Cardiac septum (tissue), 1 donor: ENCODE measurements at regions of chr1 and their contacts with region 1.

Region 1: GRCh38 chr1:12658531-12659453 is 14.9 kb downstream of the AADACL4 start:
- DNase-seq: peak; percentile 83

Region 2: DNA sequence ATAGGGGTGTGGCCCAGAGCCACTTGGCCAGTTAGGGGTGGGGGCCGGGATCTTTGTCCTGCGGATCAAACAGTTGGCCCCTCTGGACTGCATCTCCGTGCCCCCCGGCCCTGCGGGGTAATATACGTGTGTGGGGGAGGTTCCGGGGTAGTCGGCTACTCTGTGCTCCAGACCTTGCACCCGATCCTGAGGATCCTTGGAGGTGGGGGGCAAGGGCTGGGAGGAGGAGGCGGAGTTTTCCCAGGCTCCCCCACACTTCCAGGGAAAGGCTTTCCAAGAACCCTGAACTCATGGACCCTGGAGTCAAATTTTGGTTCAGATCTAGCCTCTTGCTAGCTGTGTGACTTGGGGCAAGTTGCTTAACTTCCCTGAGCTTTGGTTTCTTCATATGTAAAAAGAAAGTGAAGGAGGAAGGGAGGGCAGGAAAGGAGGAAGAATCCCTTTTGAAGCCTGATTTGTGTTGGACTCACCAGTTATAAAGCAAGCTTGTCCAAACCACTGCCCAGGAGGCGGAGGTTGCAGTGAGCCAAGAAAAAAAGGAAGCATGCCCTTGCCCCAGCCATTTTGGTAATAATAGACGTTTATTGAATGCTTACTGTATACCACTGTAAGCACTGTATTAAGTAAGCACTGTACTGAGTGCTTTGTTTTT is 638.8 kb before region 1 on chr1:
- intact Hi-C with region 1: no loop called
- DNase-seq: no peak

Region 3: DNA sequence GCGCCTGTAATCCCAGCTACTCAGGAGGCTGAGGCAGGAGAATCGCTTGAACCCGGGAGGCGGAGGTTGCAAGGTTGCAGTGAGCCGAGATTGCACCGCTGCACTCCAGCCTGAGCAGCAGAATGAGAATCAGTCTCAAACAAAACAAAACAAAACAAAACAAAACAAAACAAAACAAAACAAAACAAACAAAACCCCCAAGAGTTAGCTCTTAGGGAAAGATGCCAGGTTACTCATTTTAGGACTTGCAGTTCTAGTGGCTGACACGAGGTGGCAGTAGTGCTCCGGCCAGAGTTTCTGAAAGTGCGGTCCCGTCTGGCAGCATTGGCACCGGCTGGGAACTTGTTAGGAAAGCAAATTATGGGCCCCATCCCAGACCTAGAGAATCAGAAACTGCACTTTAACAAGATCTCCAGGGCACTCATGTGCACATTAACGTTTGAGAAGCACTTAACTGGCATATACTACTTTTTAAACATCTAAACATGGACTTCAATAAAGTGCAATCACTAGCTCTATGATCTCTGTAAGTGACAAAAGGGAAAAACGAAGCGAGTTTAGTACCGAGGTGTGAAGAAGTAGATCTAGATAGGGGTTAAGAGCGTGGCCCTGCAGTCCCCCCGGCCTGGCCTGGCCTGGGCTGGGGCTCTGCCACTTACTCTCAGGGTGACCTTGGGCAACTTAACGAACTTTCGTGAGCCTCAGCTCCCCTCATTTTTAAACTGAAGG is 533.9 kb before region 1 on chr1:
- intact Hi-C with region 1: loop called (anchors 10 kb)
- DNase-seq: peak; percentile 93

Region 4: GRCh38 chr1:12272770-12273169 is 386.0 kb before region 1 on chr1:
- intact Hi-C with region 1: loop called (anchors 5 kb)
- DNase-seq: no peak

Region 5: GRCh38 chr1:12314333-12314903 is 344.4 kb before region 1 on chr1:
- intact Hi-C with region 1: loop called (anchors 2 kb)
- DNase-seq: no peak

Region 6: GRCh38 chr1:12407050-12407961 is 251.5 kb before region 1 on chr1:
- intact Hi-C with region 1: loop called (anchors 5 kb)
- DNase-seq: no peak

Region 7: GRCh38 chr1:12579793-12580499 is 78.8 kb before region 1 on chr1:
- intact Hi-C with region 1: no loop called
- DNase-seq: no peak